MCF 10A (cell line): ENCODE measurements at regions of chr4 and their contacts with region 1.

Region 1: GRCh38 chr4:83639849-83640493 is 104.1 kb downstream of the GPAT3 start:
- DNase-seq: peak; percentile 83
- H3K4me3 Mint-ChIP-seq: no peak overlapping the region
- H3K27ac Mint-ChIP-seq: no peak overlapping the region
- H3K4me1 Mint-ChIP-seq: peaks cover 5% of the 10 kb centered on the region
- H3K27me3 Mint-ChIP-seq: peaks cover 39% of the 10 kb centered on the region
- CTCF ChIP-seq: peak; percentile 85

Region 2: GRCh38 chr4:83110223-83110945 is 529.6 kb before region 1 on chr4:
- CTCF ChIA-PET with region 1: no interaction called
- POLR2A ChIA-PET with region 1: no interaction called
- intact Hi-C with region 1: no loop called
- DNase-seq: peak; percentile 79
- H3K4me3 Mint-ChIP-seq: peak overlapping the region; percentile 68
- H3K27ac Mint-ChIP-seq: peak overlapping the region; percentile 79
- H3K4me1 Mint-ChIP-seq: peaks cover 25% of the 10 kb centered on the region
- H3K27me3 Mint-ChIP-seq: no peaks in the 10 kb centered on the region
- CTCF ChIP-seq: peak; percentile 44

Region 3: GRCh38 chr4:83340692-83341343 is 299.2 kb before region 1 on chr4:
- CTCF ChIA-PET with region 1: no interaction called
- POLR2A ChIA-PET with region 1: no interaction called
- intact Hi-C with region 1: no loop called
- DNase-seq: no peak
- H3K4me3 Mint-ChIP-seq: no peak overlapping the region
- H3K27ac Mint-ChIP-seq: no peak overlapping the region
- H3K4me1 Mint-ChIP-seq: no peaks in the 10 kb centered on the region
- H3K27me3 Mint-ChIP-seq: no peaks in the 10 kb centered on the region
- CTCF ChIP-seq: no peak

Region 4: DNA sequence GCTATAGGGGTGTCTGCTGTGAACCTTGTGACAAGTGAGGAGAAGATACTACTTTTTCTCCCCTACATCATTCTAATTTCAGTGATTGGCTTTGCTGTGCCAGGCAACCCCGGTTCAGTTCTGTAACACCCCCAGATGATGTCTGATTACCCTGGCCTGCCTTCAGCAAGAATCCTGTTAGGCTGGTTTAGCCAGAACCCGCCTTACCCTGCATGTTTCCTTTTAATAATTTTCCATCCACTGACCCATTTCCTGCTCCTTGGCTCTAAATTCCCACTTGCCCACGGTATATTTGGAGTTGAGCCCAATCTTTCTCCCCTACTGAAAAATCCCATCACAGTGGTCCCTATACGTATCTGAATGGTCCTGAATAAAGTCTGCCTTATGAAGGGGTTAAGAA is 258.8 kb before region 1 on chr4:
- CTCF ChIA-PET with region 1: no interaction called
- POLR2A ChIA-PET with region 1: no interaction called
- intact Hi-C with region 1: no loop called
- DNase-seq: no peak
- H3K4me3 Mint-ChIP-seq: no peak overlapping the region
- H3K27ac Mint-ChIP-seq: no peak overlapping the region
- H3K4me1 Mint-ChIP-seq: no peaks in the 10 kb centered on the region
- H3K27me3 Mint-ChIP-seq: no peaks in the 10 kb centered on the region
- CTCF ChIP-seq: no peak

Region 5: GRCh38 chr4:83490876-83491450 is 149.0 kb before region 1 on chr4:
- CTCF ChIA-PET with region 1: interaction called, 49 read pairs
- POLR2A ChIA-PET with region 1: no interaction called
- intact Hi-C with region 1: loop called (anchors 1 kb)
- DNase-seq: peak; percentile 55
- H3K4me3 Mint-ChIP-seq: no peak overlapping the region
- H3K27ac Mint-ChIP-seq: no peak overlapping the region
- H3K4me1 Mint-ChIP-seq: no peaks in the 10 kb centered on the region
- H3K27me3 Mint-ChIP-seq: no peaks in the 10 kb centered on the region
- CTCF ChIP-seq: peak; percentile 74

Region 6: DNA sequence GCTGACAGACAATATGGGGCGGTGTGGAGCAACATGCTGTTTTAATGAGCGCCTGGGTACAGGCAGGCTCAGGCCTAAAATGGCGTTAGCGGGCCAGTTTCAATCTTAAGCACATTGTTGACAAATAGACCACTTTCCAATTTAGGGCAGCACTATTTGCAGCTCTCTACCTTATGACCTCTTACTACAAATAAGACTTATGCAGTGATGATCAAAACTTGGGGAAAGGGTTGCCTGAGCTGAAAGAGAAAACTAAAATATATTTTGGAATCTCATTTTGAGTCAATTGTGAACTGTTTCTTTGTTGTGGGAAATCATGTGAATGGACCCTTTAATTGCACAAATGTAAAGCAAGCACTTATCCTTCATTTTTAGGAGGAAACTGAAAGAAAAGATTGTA is 129.5 kb before region 1 on chr4:
- CTCF ChIA-PET with region 1: interaction called, 38 read pairs
- POLR2A ChIA-PET with region 1: interaction called, 3 read pairs
- intact Hi-C with region 1: loop called (anchors 1 kb)
- DNase-seq: no peak
- H3K4me3 Mint-ChIP-seq: no peak overlapping the region
- H3K27ac Mint-ChIP-seq: no peak overlapping the region
- H3K4me1 Mint-ChIP-seq: no peaks in the 10 kb centered on the region
- H3K27me3 Mint-ChIP-seq: no peaks in the 10 kb centered on the region
- CTCF ChIP-seq: no peak

Region 7: GRCh38 chr4:83771113-83771705 is 131.2 kb after region 1 on chr4:
- CTCF ChIA-PET with region 1: interaction called, 36 read pairs
- POLR2A ChIA-PET with region 1: no interaction called
- intact Hi-C with region 1: no loop called
- DNase-seq: peak; percentile 71
- H3K4me3 Mint-ChIP-seq: no peak overlapping the region
- H3K27ac Mint-ChIP-seq: no peak overlapping the region
- H3K4me1 Mint-ChIP-seq: no peaks in the 10 kb centered on the region
- H3K27me3 Mint-ChIP-seq: peaks cover 37% of the 10 kb centered on the region
- CTCF ChIP-seq: peak; percentile 79

Region 8: DNA sequence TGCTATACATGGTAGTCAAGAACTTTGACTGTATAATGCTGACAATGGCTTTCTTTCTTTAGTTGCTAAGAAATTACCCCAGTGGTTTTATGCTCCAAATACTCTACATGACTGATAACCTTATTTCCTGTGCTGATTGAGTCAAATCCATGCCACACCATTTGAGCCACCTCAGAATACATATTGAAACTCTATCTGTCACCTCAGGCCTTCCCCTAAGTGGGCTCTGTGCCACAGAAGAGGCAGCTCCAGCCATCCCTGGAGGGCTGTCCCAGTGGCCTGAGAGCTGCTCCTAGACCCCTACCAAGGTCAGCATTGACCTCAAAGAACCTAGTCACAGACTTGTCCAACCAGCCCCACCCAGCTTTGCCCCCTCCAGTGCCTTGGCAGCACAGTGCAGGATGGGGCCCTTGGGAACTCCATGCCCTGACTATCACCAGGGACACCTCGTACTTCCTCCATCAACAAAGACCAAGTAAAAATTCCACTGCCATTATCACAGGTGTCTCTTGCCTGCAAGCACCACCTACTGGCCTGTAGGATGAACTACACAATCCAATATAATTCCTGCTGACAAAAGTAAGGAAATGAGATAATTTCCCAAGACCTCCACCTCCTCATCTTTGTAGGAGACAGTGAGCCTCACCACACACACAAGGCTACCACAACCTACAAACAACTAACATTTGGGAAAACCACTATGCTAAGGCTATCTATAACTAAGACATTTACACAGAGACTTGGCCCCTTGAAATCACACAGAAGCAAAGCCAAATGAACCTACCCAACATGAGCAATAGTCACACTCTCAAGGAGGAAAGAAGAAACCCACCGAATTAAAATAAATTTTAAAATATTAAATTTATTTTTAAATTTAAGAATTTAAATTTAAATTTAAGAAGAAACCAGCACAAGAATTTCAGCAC is 619.2 kb after region 1 on chr4:
- CTCF ChIA-PET with region 1: interaction called, 3 read pairs
- POLR2A ChIA-PET with region 1: no interaction called
- intact Hi-C with region 1: loop called (anchors 5 kb)
- DNase-seq: peak; percentile 53
- H3K4me3 Mint-ChIP-seq: no peak overlapping the region
- H3K27ac Mint-ChIP-seq: no peak overlapping the region
- H3K4me1 Mint-ChIP-seq: peaks cover 5% of the 10 kb centered on the region
- H3K27me3 Mint-ChIP-seq: peaks cover 80% of the 10 kb centered on the region
- CTCF ChIP-seq: peak; percentile 69

Region 9: GRCh38 chr4:84511703-84512102 is 871.7 kb after region 1 on chr4:
- CTCF ChIA-PET with region 1: no interaction called
- POLR2A ChIA-PET with region 1: no interaction called
- intact Hi-C with region 1: no loop called
- DNase-seq: no peak
- H3K4me3 Mint-ChIP-seq: no peak overlapping the region
- H3K27ac Mint-ChIP-seq: no peak overlapping the region
- H3K4me1 Mint-ChIP-seq: no peaks in the 10 kb centered on the region
- H3K27me3 Mint-ChIP-seq: no peaks in the 10 kb centered on the region
- CTCF ChIP-seq: no peak

Region 10: DNA sequence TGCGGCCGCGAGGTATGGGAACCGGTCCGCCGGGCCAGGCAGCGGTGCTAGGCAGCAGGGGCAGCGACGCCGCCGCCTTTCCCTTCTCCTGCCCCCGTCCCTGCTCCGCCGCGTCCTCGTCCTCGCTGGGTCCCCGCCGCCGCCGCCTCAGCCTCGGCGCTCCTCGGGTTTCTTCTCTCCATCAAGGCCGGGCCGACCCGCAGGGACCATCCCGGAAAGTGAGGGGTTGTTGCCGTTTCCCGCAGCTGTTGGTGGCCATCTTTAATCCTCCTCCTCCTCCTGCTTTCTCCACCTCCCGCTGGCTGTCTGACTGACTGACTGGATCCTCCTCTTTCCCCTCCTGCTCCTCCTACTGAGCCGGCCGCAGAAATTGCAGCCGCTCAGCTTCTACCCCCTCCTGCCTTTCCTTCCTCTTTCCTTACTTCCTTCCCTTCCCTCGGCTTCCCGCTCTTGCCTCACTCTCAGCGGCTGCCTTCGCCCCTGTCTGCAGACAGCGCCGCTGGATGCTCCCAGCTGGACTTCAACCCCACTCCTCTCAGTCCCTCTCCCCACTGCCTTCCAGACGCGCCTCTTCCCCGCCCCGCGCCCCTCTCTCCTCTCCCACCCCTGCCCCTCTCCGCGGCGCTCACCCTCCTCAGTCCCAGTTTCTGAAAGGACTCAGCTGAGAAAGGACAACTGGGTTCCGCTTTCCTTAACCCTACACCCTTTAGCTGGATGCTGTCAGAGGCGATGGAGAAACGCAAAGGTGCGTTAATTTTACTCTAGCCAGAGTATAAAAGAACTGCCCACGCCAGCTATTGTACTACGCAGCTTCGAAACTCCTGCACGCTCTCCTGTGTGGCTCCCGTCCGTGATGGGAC is 1326.6 kb after region 1 on chr4 and contains the start of gene WDFY3:
- CTCF ChIA-PET with region 1: no interaction called
- POLR2A ChIA-PET with region 1: no interaction called
- intact Hi-C with region 1: loop called (anchors 10 kb)
- DNase-seq: peak; percentile 93
- H3K4me3 Mint-ChIP-seq: peak within 1 kb of the TSS; percentile 88
- H3K27ac Mint-ChIP-seq: peak within 1 kb of the TSS; percentile 97
- H3K4me1 Mint-ChIP-seq: peaks cover 4% of the 10 kb centered on the region
- H3K27me3 Mint-ChIP-seq: no peaks in the 10 kb centered on the region
- CTCF ChIP-seq: no peak
- total RNA-seq, gene WDFY3: 73.7 and 90.7 TPM in 2 replicates